ENCODE measurements at regions of chr3 and their contacts with region 1.

Region 1: GRCh38 chr3:15007681-15008141 is 57.4 kb downstream of the MRPS25 start:
- DNase-seq: peak in 5 of 7 donors; percentile 27 to 73 (median 57)
- H3K4me3 ChIP-seq: no peak overlapping the region
- H3K27ac ChIP-seq: no peak overlapping the region
- H3K4me1 ChIP-seq: peaks cover 3 to 17% of the 10 kb centered on the region in 2 donors
- H3K27me3 ChIP-seq: no peaks in the 10 kb centered on the region
- CTCF ChIP-seq: no peak
- POLR2A ChIP-seq: no peak

Region 2: DNA sequence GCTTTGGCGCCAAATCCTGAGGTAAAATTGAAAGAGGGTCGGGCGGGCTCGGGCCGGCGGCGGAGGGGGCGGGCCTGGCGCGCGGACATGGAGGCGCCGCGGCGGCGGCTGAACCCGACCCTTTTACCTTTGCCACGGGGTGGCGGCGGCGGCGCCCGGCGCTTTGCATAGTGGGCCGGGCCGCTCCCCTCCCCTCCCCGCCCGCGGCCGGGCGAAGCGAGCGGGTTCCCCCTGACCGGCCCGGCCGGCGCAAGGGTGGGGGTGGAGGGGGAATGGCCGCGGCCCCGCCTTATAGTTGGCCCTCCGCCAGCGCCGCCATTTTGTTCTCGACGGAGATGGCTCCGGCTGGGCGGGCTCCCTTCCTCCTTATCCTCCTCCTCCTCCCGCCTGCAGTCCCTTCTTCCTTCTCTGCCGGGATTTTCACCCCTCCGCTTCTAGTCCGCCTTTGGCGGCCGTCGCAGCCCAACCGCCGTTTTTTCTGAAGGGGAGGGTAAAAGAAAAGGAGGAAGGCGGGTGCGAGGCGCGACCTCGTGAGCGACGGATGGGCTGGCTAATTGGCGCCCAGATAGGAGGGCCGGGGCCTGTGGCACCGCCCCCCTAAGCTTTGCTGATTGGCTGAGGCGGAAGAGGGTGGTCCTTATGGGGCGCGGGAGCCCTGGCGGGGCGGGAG is 59.7 kb before region 1 on chr3:
- intact Hi-C with region 1: loop called (anchors 10 kb)
- DNase-seq: peak; percentile 97 to 98 (median 98)
- H3K4me3 ChIP-seq: peak overlapping the region; percentile 66 to 100 (median 94)
- H3K27ac ChIP-seq: peak overlapping the region; percentile 96 to 99 (median 99)
- H3K4me1 ChIP-seq: peaks cover 14 to 34% of the 10 kb centered on the region in 2 donors
- H3K27me3 ChIP-seq: no peaks in the 10 kb centered on the region
- CTCF ChIP-seq: no peak
- POLR2A ChIP-seq: no peak

Region 3: DNA sequence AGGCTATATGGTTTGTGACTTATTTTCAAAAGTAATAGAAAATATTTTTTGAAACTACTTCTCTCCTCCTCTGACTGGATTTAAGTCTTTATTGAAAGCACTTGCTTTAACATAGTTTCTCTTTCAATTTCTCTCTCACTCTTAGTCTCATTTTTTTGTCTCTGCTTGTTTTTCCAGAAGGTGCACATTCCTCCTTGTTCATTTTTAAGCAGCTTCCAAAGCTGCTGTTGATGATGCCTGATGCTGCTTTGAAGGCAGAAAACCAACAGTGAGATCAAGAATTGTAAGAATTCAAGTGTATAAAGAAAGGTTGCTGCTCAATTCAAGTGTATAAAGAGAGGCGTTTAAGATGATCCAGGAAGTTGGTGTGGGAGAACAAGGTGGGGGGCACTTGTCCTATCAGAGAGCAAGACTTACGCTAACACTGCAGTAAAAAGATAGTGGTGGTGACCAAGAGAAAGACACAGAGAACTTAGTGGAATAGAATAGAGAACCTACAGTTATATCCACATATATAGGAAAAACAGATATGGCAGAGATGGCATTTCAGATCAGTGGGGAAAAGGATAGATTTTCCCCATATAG is 48.3 kb before region 1 on chr3:
- intact Hi-C with region 1: loop called in 1 of 2 experiments (anchors 10 kb)
- DNase-seq: no peak
- H3K4me3 ChIP-seq: no peak overlapping the region
- H3K27ac ChIP-seq: no peak overlapping the region
- H3K4me1 ChIP-seq: peaks cover 10 to 32% of the 10 kb centered on the region in 2 donors
- H3K27me3 ChIP-seq: no peaks in the 10 kb centered on the region
- CTCF ChIP-seq: no peak
- POLR2A ChIP-seq: no peak

Region 4: GRCh38 chr3:15291589-15292541 is 284.2 kb after region 1 on chr3:
- intact Hi-C with region 1: no loop called
- DNase-seq: peak in 1 of 7 donors; percentile 27
- H3K4me3 ChIP-seq: no peak overlapping the region
- H3K27ac ChIP-seq: peak overlapping the region; percentile 76 to 98 (median 92)
- H3K4me1 ChIP-seq: peaks cover 53 to 95% of the 10 kb centered on the region in 2 donors
- H3K27me3 ChIP-seq: no peaks in the 10 kb centered on the region
- CTCF ChIP-seq: no peak
- POLR2A ChIP-seq: no peak

Region 5: GRCh38 chr3:15859507-15860013 is 851.8 kb after region 1 on chr3:
- intact Hi-C with region 1: no loop called
- DNase-seq: peak; percentile 72 to 86 (median 82)
- H3K4me3 ChIP-seq: peak overlapping the region; percentile 60 to 98 (median 84)
- H3K27ac ChIP-seq: peak overlapping the region in 3 of 5 donors; percentile 54 to 78 (median 60)
- H3K4me1 ChIP-seq: peaks cover 0 to 18% of the 10 kb centered on the region in 2 donors
- H3K27me3 ChIP-seq: no peaks in the 10 kb centered on the region
- CTCF ChIP-seq: peak in 1 of 6 experiments; percentile 26
- POLR2A ChIP-seq: peak; percentile 26 to 61